Activated CD4-positive, alpha-beta memory T cell treated with anti-CD3 and anti-CD28 coated beads for 36 hours (primary cell): ENCODE measurements at regions of chr21 and their contacts with region 1.

Region 1: DNA sequence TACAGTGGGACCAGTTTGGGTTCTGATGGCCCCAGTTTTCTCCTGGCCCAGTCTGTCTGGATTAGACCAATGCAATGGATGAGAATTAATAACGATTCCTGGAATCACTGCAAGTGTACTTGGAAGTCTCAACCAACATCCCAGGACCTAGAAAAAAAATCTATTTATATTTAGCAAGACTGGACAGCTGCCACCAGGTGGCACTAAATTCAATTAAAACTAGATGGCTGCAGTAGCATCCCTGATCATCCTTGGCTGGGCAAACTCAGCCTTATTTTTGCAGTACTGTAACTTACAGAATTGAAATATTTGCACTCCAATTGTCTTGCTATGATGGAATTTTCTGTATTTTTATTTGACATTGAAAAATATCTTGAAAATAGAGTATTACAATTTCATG is 165.7 kb downstream of the NCAM2 start:
- DNase-seq: peak; percentile 34
- H3K4me3 Mint-ChIP-seq: no peak overlapping the region
- H3K27ac Mint-ChIP-seq: no peak overlapping the region
- H3K4me1 Mint-ChIP-seq: no peaks in the 10 kb centered on the region
- H3K27me3 Mint-ChIP-seq: no peaks in the 10 kb centered on the region

Region 2: GRCh38 chr21:21921421-21922232 is 757.7 kb after region 1 on chr21:
- CTCF ChIA-PET with region 1: no interaction called
- POLR2A ChIA-PET with region 1: no interaction called
- intact Hi-C with region 1: loop called (anchors 2 kb)
- DNase-seq: no peak
- H3K4me3 Mint-ChIP-seq: no peak overlapping the region
- H3K27ac Mint-ChIP-seq: no peak overlapping the region
- H3K4me1 Mint-ChIP-seq: no peaks in the 10 kb centered on the region
- H3K27me3 Mint-ChIP-seq: no peaks in the 10 kb centered on the region

Region 3: DNA sequence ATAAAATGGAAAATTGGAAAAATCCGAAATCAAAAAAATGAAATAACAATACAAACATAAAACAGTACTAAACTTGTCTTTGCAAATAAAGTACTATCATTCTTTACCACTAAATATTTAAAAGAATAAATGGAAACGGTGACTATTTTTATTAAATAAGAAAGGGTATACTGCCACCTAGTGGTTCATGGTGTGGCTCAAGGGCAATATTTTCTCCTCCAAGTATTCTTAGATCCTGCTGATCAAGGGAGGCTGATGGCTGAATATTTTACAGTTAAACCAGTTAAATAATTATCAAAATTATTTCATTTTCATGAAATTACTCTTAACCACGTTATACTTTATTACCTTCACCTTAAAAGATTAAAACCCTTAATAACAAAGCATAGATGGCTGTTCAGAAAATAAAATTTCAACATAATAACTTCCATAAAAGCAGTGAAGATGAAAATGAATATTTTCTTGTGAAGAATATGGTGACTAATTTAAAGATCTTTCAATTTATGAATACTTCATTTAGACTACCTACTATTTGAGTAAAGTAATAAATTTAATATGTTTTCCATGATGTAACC is 1628.2 kb after region 1 on chr21:
- CTCF ChIA-PET with region 1: interaction called, 6 read pairs
- POLR2A ChIA-PET with region 1: no interaction called
- intact Hi-C with region 1: loop called (anchors 1 kb)
- DNase-seq: no peak
- H3K4me3 Mint-ChIP-seq: no peak overlapping the region
- H3K27ac Mint-ChIP-seq: no peak overlapping the region
- H3K4me1 Mint-ChIP-seq: no peaks in the 10 kb centered on the region
- H3K27me3 Mint-ChIP-seq: no peaks in the 10 kb centered on the region